ENCODE measurements at regions of chr2 and their contacts with region 1.

Region 1: GRCh38 chr2:181165199-181165868 is 184.9 kb downstream of the UBE2E3 start:
- DNase-seq: peak in 4 of 9 experiments; percentile 20 to 78 (median 42)
- ATAC-seq: peak; percentile 76
- H3K4me3 ChIP-seq: peak overlapping the region; percentile 9 to 11
- H3K4me3 Mint-ChIP-seq: peak overlapping the region; percentile 70
- H3K27ac ChIP-seq: peak overlapping the region; percentile 36 to 90
- H3K27ac Mint-ChIP-seq: peak overlapping the region; percentile 95
- H3K4me1 ChIP-seq: peaks cover 45% of the 10 kb centered on the region
- H3K4me1 Mint-ChIP-seq: peaks cover 64% of the 10 kb centered on the region
- H3K27me3 ChIP-seq: no peaks in the 10 kb centered on the region
- H3K27me3 Mint-ChIP-seq: no peaks in the 10 kb centered on the region
- CTCF ChIP-seq: no peak

Region 2: DNA sequence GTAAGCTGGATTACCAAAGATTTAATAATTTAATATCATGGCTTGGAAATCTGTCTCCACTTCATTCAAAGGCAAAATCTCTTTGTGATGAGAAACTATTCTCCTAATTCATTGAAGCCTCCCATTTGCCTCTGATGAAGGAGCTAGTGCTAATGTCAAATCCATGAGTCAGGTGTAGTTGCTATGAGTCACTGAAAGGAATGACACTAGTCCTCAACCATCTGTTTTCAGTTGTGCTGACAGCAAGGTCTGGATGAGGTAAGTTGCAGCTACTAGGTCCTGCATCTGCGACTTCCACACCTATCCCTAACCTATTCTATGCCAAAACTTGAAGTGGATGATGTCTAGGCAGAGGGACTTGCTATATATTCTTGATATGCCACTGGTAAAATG is 508.9 kb before region 1 on chr2:
- CTCF ChIA-PET with region 1: no interaction called
- POLR2A ChIA-PET with region 1: no interaction called
- intact Hi-C with region 1: no loop called
- DNase-seq: no peak
- ATAC-seq: no peak
- H3K4me3 ChIP-seq: no peak overlapping the region
- H3K4me3 Mint-ChIP-seq: no peak overlapping the region
- H3K27ac ChIP-seq: no peak overlapping the region
- H3K27ac Mint-ChIP-seq: no peak overlapping the region
- H3K4me1 ChIP-seq: no peaks in the 10 kb centered on the region
- H3K4me1 Mint-ChIP-seq: no peaks in the 10 kb centered on the region
- H3K27me3 ChIP-seq: peaks cover 0 to 2% of the 10 kb centered on the region in 2 experiments
- H3K27me3 Mint-ChIP-seq: peaks cover 9% of the 10 kb centered on the region
- CTCF ChIP-seq: no peak

Region 3: DNA sequence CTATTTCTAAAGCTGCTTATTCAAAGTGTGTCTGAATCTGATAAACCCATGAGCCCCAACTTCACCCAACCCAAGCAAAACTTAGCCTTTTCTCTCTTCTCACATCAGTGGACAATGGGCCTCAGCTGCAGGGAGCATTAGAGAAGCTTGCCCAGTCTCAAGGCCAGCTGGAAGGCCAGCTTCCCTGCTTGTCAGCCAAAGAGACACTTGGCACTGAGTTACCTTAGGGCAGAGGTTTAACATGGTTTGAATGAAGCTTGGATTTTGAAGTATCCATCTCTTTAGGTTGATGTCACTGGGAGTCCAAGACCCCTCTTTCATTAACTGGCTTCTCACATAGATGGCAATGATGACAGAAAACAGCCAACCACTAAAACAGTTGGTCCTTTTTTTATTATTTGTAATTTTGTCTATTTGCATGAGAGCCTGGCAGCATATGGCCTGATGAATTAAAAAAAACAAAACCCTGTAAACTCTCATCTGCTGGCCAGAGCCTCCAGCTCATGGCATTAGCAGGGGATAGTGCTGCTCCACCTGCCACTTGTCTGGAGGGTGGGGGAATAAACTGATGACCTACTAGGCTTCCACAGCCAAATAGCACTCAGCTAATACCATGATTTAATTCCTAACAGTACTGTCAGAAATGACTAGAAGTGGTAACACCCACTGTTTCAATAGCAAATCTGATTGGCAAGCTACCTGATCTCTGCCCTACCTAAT is 48.0 kb before region 1 on chr2:
- CTCF ChIA-PET with region 1: no interaction called
- POLR2A ChIA-PET with region 1: interaction called, 3 read pairs
- intact Hi-C with region 1: loop called in 1 of 2 experiments (anchors 5 kb)
- DNase-seq: no peak
- ATAC-seq: no peak
- H3K4me3 ChIP-seq: no peak overlapping the region
- H3K4me3 Mint-ChIP-seq: no peak overlapping the region
- H3K27ac ChIP-seq: no peak overlapping the region
- H3K27ac Mint-ChIP-seq: no peak overlapping the region
- H3K4me1 ChIP-seq: peaks cover 18% of the 10 kb centered on the region
- H3K4me1 Mint-ChIP-seq: peaks cover 36% of the 10 kb centered on the region
- H3K27me3 ChIP-seq: no peaks in the 10 kb centered on the region
- H3K27me3 Mint-ChIP-seq: no peaks in the 10 kb centered on the region
- CTCF ChIP-seq: no peak

Region 4: DNA sequence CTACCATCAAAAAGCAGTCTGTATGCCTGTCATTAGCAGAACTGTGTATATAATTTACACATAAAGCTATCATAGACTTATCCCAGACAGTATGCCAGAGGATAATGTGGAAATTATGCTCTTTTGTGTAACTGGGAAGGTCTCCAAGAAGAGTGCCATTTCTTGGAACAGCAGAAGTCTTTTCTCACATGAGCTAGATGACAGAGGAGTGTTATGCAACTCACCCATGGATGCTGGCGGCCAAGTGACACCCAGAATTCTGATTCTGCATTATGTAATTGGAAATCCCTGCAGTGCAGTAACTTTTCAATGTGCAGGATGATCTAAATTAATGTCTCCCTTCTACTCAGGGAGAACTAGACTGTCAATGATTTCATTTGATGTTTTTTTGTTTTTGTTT is 24.9 kb before region 1 on chr2:
- CTCF ChIA-PET with region 1: interaction called, 4 read pairs
- POLR2A ChIA-PET with region 1: interaction called, 5 read pairs
- intact Hi-C with region 1: loop called in 1 of 2 experiments (anchors 1 kb)
- DNase-seq: peak in 2 of 9 experiments; percentile 60 to 73
- ATAC-seq: peak; percentile 15
- H3K4me3 ChIP-seq: no peak overlapping the region
- H3K4me3 Mint-ChIP-seq: peak overlapping the region; percentile 80
- H3K27ac ChIP-seq: peak overlapping the region; percentile 58 to 73
- H3K27ac Mint-ChIP-seq: peak overlapping the region; percentile 99
- H3K4me1 ChIP-seq: peaks cover 62% of the 10 kb centered on the region
- H3K4me1 Mint-ChIP-seq: peaks cover 79% of the 10 kb centered on the region
- H3K27me3 ChIP-seq: no peaks in the 10 kb centered on the region
- H3K27me3 Mint-ChIP-seq: no peaks in the 10 kb centered on the region
- CTCF ChIP-seq: no peak

Region 5: DNA sequence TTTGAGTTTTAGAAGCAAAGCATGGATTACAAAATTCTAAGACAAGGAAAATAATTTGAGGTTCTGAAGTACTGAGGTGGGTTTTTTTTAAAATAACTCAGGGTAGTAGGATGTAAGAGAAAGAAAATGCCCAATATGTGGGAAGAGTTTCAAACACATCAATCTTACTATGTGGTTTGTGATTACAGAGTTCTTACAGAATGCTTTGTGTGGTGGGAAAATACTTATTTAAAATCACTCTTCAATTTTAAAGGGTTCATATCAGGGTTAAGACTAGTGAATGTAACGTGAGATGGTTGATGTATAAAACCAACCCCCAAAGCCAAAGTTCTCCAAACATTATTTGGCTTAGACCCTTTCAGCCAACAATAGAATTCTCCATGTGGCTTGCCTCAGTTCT is 11.4 kb before region 1 on chr2:
- CTCF ChIA-PET with region 1: interaction called, 4 read pairs
- POLR2A ChIA-PET with region 1: interaction called, 3 read pairs
- intact Hi-C with region 1: loop called in 1 of 2 experiments (anchors 1 kb)
- DNase-seq: no peak
- ATAC-seq: no peak
- H3K4me3 ChIP-seq: no peak overlapping the region
- H3K4me3 Mint-ChIP-seq: no peak overlapping the region
- H3K27ac ChIP-seq: no peak overlapping the region
- H3K27ac Mint-ChIP-seq: peak overlapping the region; percentile 81
- H3K4me1 ChIP-seq: peaks cover 32% of the 10 kb centered on the region
- H3K4me1 Mint-ChIP-seq: peaks cover 53% of the 10 kb centered on the region
- H3K27me3 ChIP-seq: no peaks in the 10 kb centered on the region
- H3K27me3 Mint-ChIP-seq: no peaks in the 10 kb centered on the region
- CTCF ChIP-seq: no peak

Region 6: GRCh38 chr2:181178823-181179412 is 13.6 kb after region 1 on chr2:
- CTCF ChIA-PET with region 1: interaction called, 3 read pairs
- POLR2A ChIA-PET with region 1: no interaction called
- intact Hi-C with region 1: loop called in 1 of 2 experiments (anchors 2 kb)
- DNase-seq: peak in 5 of 9 experiments; percentile 34 to 73 (median 39)
- ATAC-seq: peak; percentile 79
- H3K4me3 ChIP-seq: no peak overlapping the region
- H3K4me3 Mint-ChIP-seq: no peak overlapping the region
- H3K27ac ChIP-seq: peak overlapping the region in 1 of 2 experiments; percentile 34
- H3K27ac Mint-ChIP-seq: peak overlapping the region; percentile 47
- H3K4me1 ChIP-seq: peaks cover 16% of the 10 kb centered on the region
- H3K4me1 Mint-ChIP-seq: peaks cover 54% of the 10 kb centered on the region
- H3K27me3 ChIP-seq: no peaks in the 10 kb centered on the region
- H3K27me3 Mint-ChIP-seq: no peaks in the 10 kb centered on the region
- CTCF ChIP-seq: peak; percentile 64

Region 7: GRCh38 chr2:181190711-181191110 is 25.4 kb after region 1 on chr2:
- CTCF ChIA-PET with region 1: interaction called, 3 read pairs
- POLR2A ChIA-PET with region 1: interaction called, 3 read pairs
- intact Hi-C with region 1: loop called in 1 of 2 experiments (anchors 2 kb)
- DNase-seq: no peak
- ATAC-seq: no peak
- H3K4me3 ChIP-seq: no peak overlapping the region
- H3K4me3 Mint-ChIP-seq: no peak overlapping the region
- H3K27ac ChIP-seq: no peak overlapping the region
- H3K27ac Mint-ChIP-seq: no peak overlapping the region
- H3K4me1 ChIP-seq: peaks cover 6% of the 10 kb centered on the region
- H3K4me1 Mint-ChIP-seq: peaks cover 45% of the 10 kb centered on the region
- H3K27me3 ChIP-seq: no peaks in the 10 kb centered on the region
- H3K27me3 Mint-ChIP-seq: no peaks in the 10 kb centered on the region
- CTCF ChIP-seq: no peak

Measured in CD8-positive, alpha-beta T cell (primary cell).